HEK293 (cell line): ENCODE measurements at regions of chr1 and their contacts with region 1.

Region 1: DNA sequence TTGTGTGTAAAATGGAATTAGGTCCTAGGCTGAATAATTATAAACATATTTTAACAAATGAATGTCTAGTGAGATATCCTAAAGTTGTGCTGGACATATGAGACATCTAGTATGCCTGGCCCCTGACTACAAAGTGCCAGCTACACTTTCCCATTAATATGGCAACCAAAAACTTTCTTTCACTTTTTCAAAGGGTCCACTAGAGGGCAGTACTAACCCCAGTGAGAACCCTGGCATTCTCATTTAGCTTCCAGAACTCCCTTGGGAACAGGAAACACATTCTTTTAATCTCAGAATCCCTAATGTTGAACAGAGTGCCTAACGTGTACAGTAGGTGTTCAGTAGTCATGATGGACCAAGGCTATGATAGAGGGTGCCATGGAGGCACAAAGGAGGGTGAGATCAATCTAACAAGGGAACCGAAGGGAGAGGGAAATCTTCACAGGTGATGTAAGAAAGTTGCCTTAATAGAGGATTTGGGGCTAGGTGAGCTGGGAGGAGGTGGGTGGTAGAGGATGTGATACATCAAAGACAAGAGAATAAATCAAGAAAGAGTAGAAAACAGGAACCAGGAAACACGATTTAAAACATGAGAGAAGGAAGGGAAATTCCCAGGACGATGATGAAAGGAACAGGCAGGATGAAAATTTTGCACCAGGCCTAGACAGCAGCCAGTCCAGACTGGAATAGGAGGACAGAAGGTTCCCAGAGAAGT is 41.6 kb downstream of the NSL1 start:
- H3K4me3 ChIP-seq: no peak overlapping the region
- H3K27ac ChIP-seq: no peak overlapping the region
- H3K4me1 ChIP-seq: no peaks in the 10 kb centered on the region
- CTCF ChIP-seq: peak; percentile 39; the same call in 1 of the 2 replicates

Region 2: GRCh38 chr1:212477014-212477679 is 272.8 kb before region 1 on chr1:
- CTCF ChIA-PET with region 1: interaction called, 12 read pairs
- POLR2A ChIA-PET with region 1: interaction called, 4 read pairs
- H3K4me3 ChIP-seq: no peak overlapping the region
- H3K27ac ChIP-seq: no peak overlapping the region
- H3K4me1 ChIP-seq: no peaks in the 10 kb centered on the region
- CTCF ChIP-seq: peak; percentile 73

Region 3: DNA sequence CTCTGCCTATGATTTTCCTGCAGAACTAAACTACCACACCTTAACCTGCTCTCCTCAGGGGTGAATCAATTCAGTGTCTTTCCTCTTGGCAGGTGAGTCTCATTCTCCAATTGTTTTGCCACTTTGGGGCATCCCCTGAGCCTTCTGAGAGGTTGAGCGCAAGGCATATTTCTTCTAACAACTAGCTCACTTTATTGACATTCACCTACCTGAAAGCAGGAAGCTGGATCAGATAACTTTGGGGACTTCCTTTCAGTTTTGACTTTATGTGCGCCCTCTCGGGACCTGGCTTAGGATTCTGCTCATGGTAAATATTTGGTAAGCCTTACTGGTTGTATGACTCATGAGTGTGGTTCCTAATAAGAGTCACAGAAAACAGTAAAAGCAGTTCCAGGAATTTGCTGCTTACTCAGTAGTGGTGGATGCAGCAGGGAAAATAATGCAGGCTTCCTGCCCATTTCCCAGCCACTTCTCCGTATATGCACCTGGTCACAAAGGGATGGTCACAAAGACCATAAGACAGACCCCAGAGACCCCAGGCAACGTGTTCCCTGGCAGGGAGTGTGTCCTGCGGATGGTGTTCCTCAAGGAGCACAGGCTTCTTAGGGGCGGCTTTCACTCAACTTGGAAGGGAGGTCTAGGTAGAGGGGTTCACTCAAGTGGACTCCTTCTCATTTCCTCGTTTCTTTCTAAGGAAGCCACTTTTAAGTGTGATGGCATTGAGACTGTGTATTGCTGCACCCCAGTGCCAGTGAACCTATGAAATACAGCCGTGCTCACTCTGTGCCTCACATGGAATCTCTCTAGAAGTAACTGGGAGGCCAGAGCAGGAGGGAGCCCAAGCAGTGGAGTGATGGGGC is 28.4 kb before region 1 on chr1:
- CTCF ChIA-PET with region 1: interaction called, 12 read pairs
- POLR2A ChIA-PET with region 1: no interaction called
- H3K4me3 ChIP-seq: no peak overlapping the region
- H3K27ac ChIP-seq: no peak overlapping the region
- H3K4me1 ChIP-seq: no peaks in the 10 kb centered on the region
- CTCF ChIP-seq: no peak

Region 4: GRCh38 chr1:212738330-212738729 is 11.6 kb before region 1 on chr1:
- CTCF ChIA-PET with region 1: interaction called, 73 read pairs
- POLR2A ChIA-PET with region 1: no interaction called
- H3K4me3 ChIP-seq: no peak overlapping the region
- H3K27ac ChIP-seq: no peak overlapping the region
- H3K4me1 ChIP-seq: no peaks in the 10 kb centered on the region
- CTCF ChIP-seq: no peak

Region 5: DNA sequence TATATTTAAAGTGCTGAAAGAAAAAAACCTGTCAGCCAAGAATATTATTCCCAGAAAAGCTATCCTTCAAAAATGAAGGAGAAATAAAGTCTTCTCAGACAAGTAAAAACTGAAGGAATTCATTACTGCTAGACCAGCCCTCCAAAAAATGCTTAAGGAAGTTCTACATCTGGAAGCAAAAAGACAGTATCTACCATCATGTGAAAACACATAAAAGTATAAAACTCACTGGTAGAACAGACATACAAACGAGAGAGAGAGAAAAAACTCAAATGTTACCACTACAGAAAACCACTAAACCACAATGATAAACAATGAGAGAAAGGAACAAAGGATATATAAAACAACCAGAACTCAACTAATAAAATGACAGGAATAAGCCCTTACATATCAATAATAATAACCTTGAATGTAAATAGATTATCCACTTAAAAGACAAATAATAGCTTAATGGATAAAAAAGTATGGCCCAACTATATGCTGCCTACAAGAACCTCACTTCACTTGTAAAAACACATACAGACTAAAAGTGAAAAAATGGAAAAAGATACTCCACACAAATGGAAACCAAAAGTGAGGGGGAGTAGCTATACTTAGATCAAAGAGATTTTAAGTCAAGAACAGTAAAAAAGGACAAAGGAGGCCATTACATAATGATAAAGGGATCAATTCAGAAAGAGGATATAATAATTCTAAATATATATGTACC is 19.6 kb after region 1 on chr1:
- CTCF ChIA-PET with region 1: interaction called, 26 read pairs
- POLR2A ChIA-PET with region 1: no interaction called
- H3K4me3 ChIP-seq: no peak overlapping the region
- H3K27ac ChIP-seq: no peak overlapping the region
- H3K4me1 ChIP-seq: no peaks in the 10 kb centered on the region
- CTCF ChIP-seq: no peak

Region 6: DNA sequence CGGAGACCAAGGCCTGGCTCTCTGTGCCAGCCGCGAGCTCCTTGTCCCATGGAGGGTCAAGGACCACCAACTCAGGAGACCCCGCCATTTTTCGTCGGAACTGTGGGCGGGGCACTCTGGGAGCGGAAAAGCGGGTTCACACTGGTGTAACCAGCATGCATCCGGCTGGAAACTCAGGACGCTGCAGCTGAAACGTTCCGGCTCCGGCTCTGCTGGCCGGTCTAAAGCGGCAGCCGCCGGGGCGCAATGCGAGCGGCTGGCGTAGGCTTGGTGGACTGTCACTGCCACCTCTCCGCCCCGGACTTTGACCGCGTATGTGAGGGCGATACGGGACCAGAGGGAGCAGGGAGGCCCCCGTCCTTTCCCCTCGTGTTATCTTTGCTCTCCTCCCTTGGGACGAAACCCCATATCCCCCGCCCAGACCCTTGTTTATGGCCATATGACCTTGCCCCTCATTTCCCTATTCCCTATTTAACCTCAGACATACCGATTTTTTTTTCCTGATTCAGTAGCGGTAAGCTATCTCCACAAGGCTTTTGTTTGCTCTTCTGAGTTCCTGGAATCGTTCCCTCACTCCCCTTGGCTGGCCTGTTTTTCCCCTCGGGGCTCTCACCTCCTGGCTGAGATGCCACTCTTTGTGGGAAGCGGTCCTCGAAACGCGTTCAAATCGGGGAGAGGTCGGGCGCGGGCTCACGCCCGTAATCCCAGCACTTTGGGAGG is 41.9 kb after region 1 on chr1 and contains the starts of genes NSL1 and TATDN3:
- CTCF ChIA-PET with region 1: interaction called, 5 read pairs
- POLR2A ChIA-PET with region 1: interaction called, 11 read pairs
- H3K4me3 ChIP-seq: peak within 1 kb of the TSS; percentile 100
- H3K27ac ChIP-seq: peak within 1 kb of the TSS; percentile 55
- H3K4me1 ChIP-seq: no peaks in the 10 kb centered on the region
- CTCF ChIP-seq: peak; percentile 63